Right cardiac atrium (tissue), 5 donors: ENCODE measurements at regions of chr2 and their contacts with region 1.

Region 1: DNA sequence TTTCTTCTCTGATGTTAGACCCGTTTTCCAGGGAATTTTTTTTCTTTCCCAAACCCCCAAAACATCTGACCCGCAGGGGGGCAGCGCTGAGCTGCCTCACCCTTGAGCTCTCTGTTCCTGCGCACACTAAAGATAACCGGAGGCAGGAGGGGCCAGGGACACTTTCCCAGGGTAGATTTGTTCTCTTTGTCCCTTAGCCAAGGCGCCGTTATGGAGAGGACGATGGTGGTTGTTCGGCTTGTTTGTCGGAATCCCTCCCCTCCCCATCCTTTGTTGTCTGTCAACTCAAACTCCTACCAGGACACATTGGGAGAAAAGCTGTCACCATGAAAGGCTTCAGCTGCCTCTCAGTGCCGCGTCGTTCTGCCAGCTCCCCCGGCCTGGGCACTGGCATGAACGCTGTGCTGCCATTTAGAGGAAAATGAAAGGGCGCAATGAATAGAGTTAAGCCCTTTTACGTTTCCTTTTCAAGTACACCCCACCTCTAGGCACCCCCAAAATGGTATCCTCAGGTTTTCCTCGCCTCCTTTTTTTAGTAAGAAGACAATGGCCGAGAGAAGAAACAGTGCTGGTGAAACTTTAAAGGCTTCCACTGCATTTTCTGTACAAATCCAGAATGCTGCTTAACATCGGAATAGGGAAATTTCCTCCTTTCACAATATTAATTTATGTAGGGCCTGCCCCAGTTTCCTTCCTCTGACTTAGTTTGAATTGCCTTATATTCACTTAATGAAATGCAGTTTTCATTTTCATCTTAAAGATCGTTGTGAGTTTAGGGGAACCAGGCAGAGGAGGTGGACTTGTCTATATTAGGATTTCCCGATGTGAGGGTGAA is 62.1 kb downstream of the RND3 start:
- DNase-seq: peak; percentile 32 to 76 (median 59)
- ATAC-seq: peak; percentile 76 to 86
- H3K4me3 ChIP-seq: no peak overlapping the region
- H3K27ac ChIP-seq: peak overlapping the region; percentile 1
- H3K4me1 ChIP-seq: no peaks in the 10 kb centered on the region
- H3K27me3 ChIP-seq: no peaks in the 10 kb centered on the region

Region 2: DNA sequence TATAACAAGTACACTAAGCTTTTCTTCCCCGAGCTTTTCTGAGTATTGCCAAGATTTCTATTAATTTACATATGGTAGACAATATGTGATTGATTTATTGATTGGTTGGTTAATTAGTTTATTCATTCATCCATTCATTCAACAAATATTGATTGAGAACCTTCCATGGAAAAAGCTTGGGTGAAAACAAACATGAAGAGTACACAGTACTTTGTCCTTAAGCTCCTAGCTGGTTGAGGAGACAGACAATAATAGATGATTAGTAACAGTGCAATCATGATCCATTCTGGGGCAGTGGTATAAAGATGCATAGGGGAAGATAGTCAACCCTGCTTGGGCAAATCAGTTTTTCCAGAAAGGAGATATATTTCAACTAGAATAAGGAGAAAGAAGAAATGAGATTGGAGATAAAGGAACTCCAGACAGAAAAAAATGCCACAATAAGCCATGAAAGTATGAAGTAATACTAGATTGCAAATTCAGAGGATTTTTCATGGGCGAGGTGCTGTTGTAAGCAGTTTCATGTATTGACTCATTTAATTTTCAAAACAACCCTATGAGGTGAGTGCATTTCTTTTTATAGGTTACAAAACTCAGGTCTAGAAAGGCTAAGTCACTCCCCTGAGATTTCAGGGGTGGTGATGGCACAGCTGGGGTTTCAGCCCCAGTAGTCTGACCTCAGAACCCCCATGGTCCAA is 67.4 kb before region 1 on chr2:
- intact Hi-C with region 1: no loop called
- DNase-seq: no peak
- ATAC-seq: no peak
- H3K4me3 ChIP-seq: no peak overlapping the region
- H3K27ac ChIP-seq: no peak overlapping the region
- H3K4me1 ChIP-seq: no peaks in the 10 kb centered on the region
- H3K27me3 ChIP-seq: no peaks in the 10 kb centered on the region

Region 3: DNA sequence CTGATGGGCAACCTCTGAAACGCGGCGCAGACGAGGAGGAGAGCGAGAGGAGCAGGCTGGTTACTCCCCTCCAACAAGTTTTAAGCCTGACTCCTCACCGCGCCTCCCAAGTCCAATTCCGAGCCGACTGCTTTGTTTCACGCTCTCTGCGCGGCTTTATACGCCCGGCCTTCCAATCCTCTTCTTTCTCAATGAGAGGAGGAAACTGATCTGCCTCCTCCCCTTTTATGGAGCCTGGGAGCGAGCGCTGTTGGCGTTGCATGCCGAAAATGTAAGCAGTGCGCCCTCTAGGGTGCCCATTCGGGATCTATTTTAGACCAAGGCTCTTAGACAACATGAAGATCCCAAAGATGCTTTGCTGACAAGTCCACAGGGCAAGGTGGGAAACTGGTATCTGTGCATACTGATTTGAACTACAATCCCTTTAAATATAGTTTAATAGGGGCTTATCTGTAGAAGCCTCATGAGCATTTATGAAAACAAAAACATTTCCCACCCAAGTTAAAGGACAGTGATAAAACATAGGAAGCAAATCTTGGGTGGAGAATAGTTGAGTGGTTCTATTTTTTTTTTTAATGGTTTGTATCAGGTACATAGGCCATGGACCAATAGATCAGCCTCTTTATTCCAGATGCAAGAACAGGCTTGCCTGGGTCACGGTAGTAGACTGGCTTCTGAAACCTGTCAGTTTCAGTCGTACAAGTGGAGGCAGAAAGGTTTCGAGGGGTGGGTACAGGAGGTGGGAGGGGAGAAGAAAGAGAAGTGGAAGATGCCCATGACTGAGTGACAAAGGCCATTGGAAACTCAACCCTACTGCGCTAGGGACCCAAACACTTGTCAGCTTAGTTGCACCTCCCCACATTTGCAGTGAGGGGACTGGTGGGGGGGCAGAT is 62.4 kb after region 1 on chr2 and contains the start of gene RND3:
- intact Hi-C with region 1: loop called in 1 of 4 experiments (anchors 5 kb)
- DNase-seq: peak; percentile 96 to 98 (median 97)
- ATAC-seq: peak; percentile 87 to 88
- H3K4me3 ChIP-seq: peak within 1 kb of the TSS; percentile 86
- H3K27ac ChIP-seq: peak within 1 kb of the TSS; percentile 89
- H3K4me1 ChIP-seq: no peaks in the 10 kb centered on the region
- H3K27me3 ChIP-seq: no peaks in the 10 kb centered on the region
- total RNA-seq, gene RND3: 9.1 to 32.7 (median 16.1) TPM

Region 4: GRCh38 chr2:150610671-150611279 is 185.4 kb after region 1 on chr2:
- intact Hi-C with region 1: loop called in 1 of 4 experiments (anchors 10 kb)
- DNase-seq: no peak
- ATAC-seq: peak in 1 of 2 donors; percentile 26
- H3K4me3 ChIP-seq: no peak overlapping the region
- H3K27ac ChIP-seq: no peak overlapping the region
- H3K4me1 ChIP-seq: peaks cover 2% of the 10 kb centered on the region
- H3K27me3 ChIP-seq: no peaks in the 10 kb centered on the region